ENCODE measurements at regions of chr13 and their contacts with region 1.

Region 1: GRCh38 chr13:30617315-30618185 is at the start of gene USPL1:
- DNase-seq: peak; percentile 92 to 98
- H3K4me3 ChIP-seq: peak within 1 kb of the TSS; percentile 77 to 81
- H3K27ac ChIP-seq: peak within 1 kb of the TSS; percentile 99 to 100
- H3K4me1 ChIP-seq: peaks cover 0 to 21% of the 10 kb centered on the region in 2 donors
- H3K27me3 ChIP-seq: no peaks in the 10 kb centered on the region
- CTCF ChIP-seq: peak; percentile 19 to 63 (median 20)
- total RNA-seq, gene USPL1: 4.0 TPM

Region 2: DNA sequence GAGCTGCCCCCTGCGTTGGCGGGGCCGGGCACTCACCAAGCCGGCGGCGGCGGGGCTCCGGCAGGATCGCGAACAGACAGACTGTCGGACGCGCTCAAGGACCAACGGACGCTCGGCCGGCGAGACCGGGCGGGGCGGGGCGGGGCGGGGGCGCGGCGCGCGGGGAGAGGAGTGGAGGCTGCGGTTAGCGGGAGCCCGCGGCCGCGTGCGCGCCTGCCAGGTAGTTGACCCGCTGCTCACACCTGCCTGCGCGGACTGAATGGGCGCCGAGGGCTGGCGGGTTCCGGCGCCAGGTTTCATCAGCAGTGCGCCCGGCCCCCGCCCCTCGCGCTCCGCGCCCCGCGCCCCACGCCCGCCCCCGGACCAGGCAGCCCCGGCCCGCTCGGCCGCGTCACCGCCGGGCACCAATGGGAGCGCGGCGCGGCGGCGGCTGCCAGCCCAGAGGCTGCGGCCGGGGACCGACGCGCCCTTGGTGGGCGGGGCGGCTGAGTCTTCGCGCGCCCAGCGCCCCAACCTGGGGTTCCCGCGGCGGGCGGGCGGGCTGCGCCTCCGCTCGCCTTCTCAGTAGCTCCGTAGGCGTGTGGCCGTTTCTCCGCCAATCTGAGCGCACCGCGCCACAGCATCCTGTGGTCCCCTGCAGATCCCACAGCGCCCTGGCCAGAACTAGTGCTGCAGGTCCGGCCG is 1022.0 kb before region 1 on chr13 and contains the start of gene SLC7A1:
- intact Hi-C with region 1: loop called (anchors 1 kb)
- DNase-seq: peak; percentile 30 to 89
- H3K4me3 ChIP-seq: peak within 1 kb of the TSS; percentile 93
- H3K27ac ChIP-seq: peak within 1 kb of the TSS; percentile 93
- H3K4me1 ChIP-seq: peaks cover 0 to 2% of the 10 kb centered on the region in 2 donors
- H3K27me3 ChIP-seq: no peaks in the 10 kb centered on the region
- CTCF ChIP-seq: no peak
- total RNA-seq, gene SLC7A1: 17.2 TPM

Region 3: GRCh38 chr13:30395192-30396084 is 222.1 kb before region 1 on chr13:
- intact Hi-C with region 1: loop called (anchors 2 kb)
- DNase-seq: peak; percentile 85 to 95
- H3K4me3 ChIP-seq: peak overlapping the region; percentile 65 to 86
- H3K27ac ChIP-seq: peak overlapping the region; percentile 58 to 89
- H3K4me1 ChIP-seq: no peaks in the 10 kb centered on the region
- H3K27me3 ChIP-seq: no peaks in the 10 kb centered on the region
- CTCF ChIP-seq: no peak

Region 4: GRCh38 chr13:30673669-30674521 is 56.3 kb after region 1 on chr13:
- intact Hi-C with region 1: loop called (anchors 1 kb)
- DNase-seq: peak; percentile 79 to 96
- H3K4me3 ChIP-seq: peak overlapping the region; percentile 53 to 64
- H3K27ac ChIP-seq: peak overlapping the region; percentile 59 to 88
- H3K4me1 ChIP-seq: no peaks in the 10 kb centered on the region
- H3K27me3 ChIP-seq: no peaks in the 10 kb centered on the region
- CTCF ChIP-seq: peak; percentile 58 to 81 (median 61)

Region 5: DNA sequence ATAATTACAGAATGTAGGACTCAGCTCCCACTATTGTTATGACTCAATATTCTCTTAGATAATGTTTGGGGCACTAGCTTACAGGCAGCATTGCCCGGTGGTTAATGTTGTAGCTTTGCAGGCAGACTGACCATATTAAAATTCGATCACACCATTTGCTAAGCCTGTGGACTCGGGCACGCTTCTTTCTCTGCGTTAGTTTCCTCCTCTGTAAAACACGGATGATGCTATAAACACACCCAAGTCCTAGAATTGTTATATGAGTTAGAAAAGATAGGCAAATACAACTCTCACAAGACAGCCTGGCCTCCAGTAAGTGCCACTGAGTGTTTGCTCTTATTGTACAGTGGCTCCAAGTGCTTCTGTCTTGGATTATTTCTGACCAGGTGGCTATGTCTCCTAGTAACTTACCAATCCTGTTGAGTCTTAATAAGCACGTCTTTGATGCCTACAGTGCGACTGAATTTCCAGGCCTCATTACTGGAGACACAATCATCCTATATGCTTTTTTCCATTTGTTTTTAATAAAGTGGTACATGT is 67.8 kb after region 1 on chr13:
- intact Hi-C with region 1: no loop called
- DNase-seq: peak in 1 of 2 donors; percentile 1
- H3K4me3 ChIP-seq: no peak overlapping the region
- H3K27ac ChIP-seq: no peak overlapping the region
- H3K4me1 ChIP-seq: no peaks in the 10 kb centered on the region
- H3K27me3 ChIP-seq: no peaks in the 10 kb centered on the region
- CTCF ChIP-seq: no peak

Region 6: GRCh38 chr13:30978981-30979956 is 361.7 kb after region 1 on chr13:
- intact Hi-C with region 1: loop called (anchors 5 kb)
- DNase-seq: no peak
- H3K4me3 ChIP-seq: no peak overlapping the region
- H3K27ac ChIP-seq: no peak overlapping the region
- H3K4me1 ChIP-seq: peaks cover 0 to 14% of the 10 kb centered on the region in 2 donors
- H3K27me3 ChIP-seq: no peaks in the 10 kb centered on the region
- CTCF ChIP-seq: peak in 1 of 3 experiments; percentile 44